B cell (primary cell): ENCODE measurements at regions of chr9 and their contacts with region 1.

Region 1: DNA sequence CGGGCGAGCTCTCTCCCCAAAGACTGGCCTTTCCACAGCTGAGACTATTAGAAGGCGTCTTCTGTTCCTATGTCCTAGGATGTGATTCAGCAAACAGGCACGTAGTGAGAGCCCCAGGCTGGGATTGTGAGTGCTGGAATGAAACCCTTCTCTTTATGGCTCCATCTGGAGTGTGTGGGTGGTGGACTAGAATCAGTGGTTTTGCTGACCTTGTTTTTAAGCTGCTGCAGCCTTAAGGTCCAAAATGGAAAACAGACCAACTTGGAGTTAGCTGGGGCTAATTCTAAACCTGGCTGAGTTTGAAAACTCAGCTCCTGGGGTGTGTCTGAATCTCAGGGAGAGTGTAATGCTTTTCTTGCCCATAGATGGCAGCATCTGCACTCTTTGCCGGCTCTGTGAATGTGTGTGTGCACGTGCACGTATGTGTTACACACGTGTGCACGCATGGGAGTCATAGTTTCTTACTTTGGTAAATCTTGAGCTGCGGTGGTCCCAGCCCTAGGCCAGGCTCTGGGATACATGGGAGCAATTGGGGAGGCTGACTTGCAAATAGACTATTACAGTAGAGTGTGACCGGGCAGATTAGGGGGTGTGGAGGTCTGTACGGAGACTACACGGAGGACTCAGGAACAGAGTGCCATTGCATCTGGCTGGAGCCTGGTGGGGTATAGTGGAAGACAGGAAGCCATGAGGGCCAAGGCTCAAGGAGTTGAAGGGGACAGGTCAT is 10.7 kb downstream of the GSN start:
- DNase-seq: peak; percentile 62
- ATAC-seq: peak; percentile 82
- H3K4me3 ChIP-seq: no peak overlapping the region
- H3K4me3 Mint-ChIP-seq: no peak overlapping the region
- H3K27ac ChIP-seq: no peak overlapping the region
- H3K27ac Mint-ChIP-seq: peak overlapping the region; percentile 22
- H3K4me1 ChIP-seq: peaks cover 3 to 20% of the 10 kb centered on the region in 2 donors
- H3K4me1 Mint-ChIP-seq: peaks cover 22% of the 10 kb centered on the region
- H3K27me3 ChIP-seq: no peaks in the 10 kb centered on the region
- H3K27me3 Mint-ChIP-seq: no peaks in the 10 kb centered on the region
- CTCF ChIP-seq: peak; percentile 73

Region 2: GRCh38 chr9:120792898-120793765 is 485.6 kb before region 1 on chr9 and contains the start of gene FBXW2:
- CTCF ChIA-PET with region 1: no interaction called
- POLR2A ChIA-PET with region 1: no interaction called
- intact Hi-C with region 1: no loop called
- DNase-seq: peak; percentile 88
- ATAC-seq: peak; percentile 94
- H3K4me3 ChIP-seq: peak within 1 kb of the TSS; percentile 73 to 96 (median 89)
- H3K4me3 Mint-ChIP-seq: peak within 1 kb of the TSS; percentile 92
- H3K27ac ChIP-seq: peak within 1 kb of the TSS; percentile 77 to 87
- H3K27ac Mint-ChIP-seq: peak within 1 kb of the TSS; percentile 92
- H3K4me1 ChIP-seq: peaks cover 18 to 25% of the 10 kb centered on the region in 2 donors
- H3K4me1 Mint-ChIP-seq: peaks cover 38% of the 10 kb centered on the region
- H3K27me3 ChIP-seq: no peaks in the 10 kb centered on the region
- H3K27me3 Mint-ChIP-seq: no peaks in the 10 kb centered on the region
- CTCF ChIP-seq: no peak
- total RNA-seq, gene FBXW2: 70.6 and 73.3 TPM in 2 replicates

Region 3: GRCh38 chr9:120807607-120808379 is 470.9 kb before region 1 on chr9:
- CTCF ChIA-PET with region 1: no interaction called
- POLR2A ChIA-PET with region 1: no interaction called
- intact Hi-C with region 1: no loop called
- DNase-seq: no peak
- ATAC-seq: no peak
- H3K4me3 ChIP-seq: no peak overlapping the region
- H3K4me3 Mint-ChIP-seq: no peak overlapping the region
- H3K27ac ChIP-seq: no peak overlapping the region
- H3K27ac Mint-ChIP-seq: no peak overlapping the region
- H3K4me1 ChIP-seq: no peaks in the 10 kb centered on the region
- H3K4me1 Mint-ChIP-seq: no peaks in the 10 kb centered on the region
- H3K27me3 ChIP-seq: no peaks in the 10 kb centered on the region
- H3K27me3 Mint-ChIP-seq: no peaks in the 10 kb centered on the region
- CTCF ChIP-seq: no peak

Region 4: DNA sequence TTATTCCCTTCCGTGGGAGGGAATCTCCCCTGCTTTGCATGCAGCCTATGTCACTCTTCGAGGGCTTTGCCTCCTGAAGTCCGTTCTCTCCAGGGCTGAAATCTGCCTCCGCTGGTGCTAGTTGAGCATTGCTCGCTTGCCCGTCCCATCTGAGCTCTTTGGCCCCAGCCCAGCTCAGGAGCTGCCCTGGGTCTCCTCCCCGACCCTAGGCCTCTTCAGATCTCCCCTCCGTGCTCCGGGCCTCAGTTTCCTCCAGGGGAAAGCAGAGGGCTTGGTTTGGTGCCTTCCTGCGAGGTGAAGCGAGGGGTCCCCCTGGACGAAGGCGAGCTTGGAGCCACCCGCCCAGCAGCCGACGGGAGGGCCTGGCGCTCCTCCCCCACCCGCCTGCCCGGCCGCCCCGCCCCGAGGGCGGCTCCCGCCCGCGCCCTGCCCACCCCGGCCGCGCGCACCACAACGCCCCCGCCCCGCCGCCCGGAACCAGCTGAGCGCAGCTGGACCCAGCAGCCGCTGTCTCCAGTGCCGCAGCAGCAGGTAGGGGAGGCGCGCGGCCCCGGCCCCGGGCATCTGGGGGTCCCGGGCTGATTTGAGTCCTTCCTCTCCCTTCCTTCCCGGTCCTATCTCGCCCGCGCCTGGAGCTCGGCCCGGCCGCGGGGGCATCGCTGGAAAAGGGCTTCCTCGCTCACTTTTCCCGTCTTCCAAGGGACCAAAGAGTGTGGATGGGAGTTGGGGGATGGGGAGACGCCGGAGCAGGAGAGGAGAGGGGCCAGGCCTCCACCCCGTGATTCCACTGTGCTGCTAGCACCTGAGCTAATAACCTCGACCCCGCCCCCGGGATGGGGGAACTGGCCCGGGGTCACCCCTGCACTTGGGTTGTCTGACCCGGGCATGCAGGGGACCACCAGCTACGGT is 10.8 kb before region 1 on chr9 and contains the start of gene GSN:
- CTCF ChIA-PET with region 1: interaction called, 35 read pairs
- POLR2A ChIA-PET with region 1: interaction called, 7 read pairs
- intact Hi-C with region 1: no loop called
- DNase-seq: peak; percentile 61
- ATAC-seq: peak; percentile 91
- H3K4me3 ChIP-seq: peak within 1 kb of the TSS; percentile 62 to 78 (median 74)
- H3K4me3 Mint-ChIP-seq: peak within 1 kb of the TSS; percentile 91
- H3K27ac ChIP-seq: no peak within 1 kb of the TSS
- H3K27ac Mint-ChIP-seq: peak within 1 kb of the TSS; percentile 68
- H3K4me1 ChIP-seq: peaks cover 13 to 41% of the 10 kb centered on the region in 2 donors
- H3K4me1 Mint-ChIP-seq: peaks cover 32% of the 10 kb centered on the region
- H3K27me3 ChIP-seq: no peaks in the 10 kb centered on the region
- H3K27me3 Mint-ChIP-seq: no peaks in the 10 kb centered on the region
- CTCF ChIP-seq: no peak
- total RNA-seq, gene GSN: 45.4 and 45.9 TPM in 2 replicates

Region 5: GRCh38 chr9:121299467-121300234 is 21.0 kb after region 1 on chr9:
- CTCF ChIA-PET with region 1: interaction called, 23 read pairs
- POLR2A ChIA-PET with region 1: no interaction called
- intact Hi-C with region 1: no loop called
- DNase-seq: peak; percentile 57
- ATAC-seq: peak; percentile 55
- H3K4me3 ChIP-seq: peak overlapping the region; percentile 17 to 61 (median 53)
- H3K4me3 Mint-ChIP-seq: peak overlapping the region; percentile 86
- H3K27ac ChIP-seq: peak overlapping the region; percentile 51 to 64
- H3K27ac Mint-ChIP-seq: peak overlapping the region; percentile 83
- H3K4me1 ChIP-seq: peaks cover 20 to 38% of the 10 kb centered on the region in 2 donors
- H3K4me1 Mint-ChIP-seq: peaks cover 25% of the 10 kb centered on the region
- H3K27me3 ChIP-seq: peaks cover 0 to 5% (median 2%) of the 10 kb centered on the region in 4 experiments
- H3K27me3 Mint-ChIP-seq: peaks cover 4% of the 10 kb centered on the region
- CTCF ChIP-seq: no peak

Region 6: GRCh38 chr9:121455527-121456239 is 177.0 kb after region 1 on chr9:
- CTCF ChIA-PET with region 1: no interaction called
- POLR2A ChIA-PET with region 1: no interaction called
- intact Hi-C with region 1: no loop called
- DNase-seq: no peak
- ATAC-seq: no peak
- H3K4me3 ChIP-seq: no peak overlapping the region
- H3K4me3 Mint-ChIP-seq: no peak overlapping the region
- H3K27ac ChIP-seq: no peak overlapping the region
- H3K27ac Mint-ChIP-seq: no peak overlapping the region
- H3K4me1 ChIP-seq: no peaks in the 10 kb centered on the region
- H3K4me1 Mint-ChIP-seq: no peaks in the 10 kb centered on the region
- H3K27me3 ChIP-seq: peaks cover 0 to 28% (median 6%) of the 10 kb centered on the region in 4 experiments
- H3K27me3 Mint-ChIP-seq: peaks cover 40% of the 10 kb centered on the region
- CTCF ChIP-seq: no peak